Dorsolateral prefrontal cortex (tissue), 120 donors: ENCODE measurements at regions of chr16 and their contacts with region 1.

Region 1: GRCh38 chr16:29694384-29695195 is 15.6 kb downstream of the QPRT start:
- DNase-seq: no peak
- H3K4me3 ChIP-seq: no peak overlapping the region
- H3K27ac ChIP-seq: peak overlapping the region in 5 of 59 donors; percentile 7 to 41 (median 34)
- H3K27me3 ChIP-seq: no peaks in the 10 kb centered on the region
- CTCF ChIP-seq: no peak

Region 2: GRCh38 chr16:29745853-29746345 is 51.3 kb after region 1 on chr16 and contains the start of gene C16orf54:
- intact Hi-C with region 1: no loop called
- DNase-seq: peak in 4 of 10 donors; percentile 30 to 54 (median 50)
- H3K4me3 ChIP-seq: peak within 1 kb of the TSS in 31 of 59 donors; percentile 2 to 52 (median 27)
- H3K27ac ChIP-seq: no peak within 1 kb of the TSS
- H3K27me3 ChIP-seq: no peaks in the 10 kb centered on the region
- CTCF ChIP-seq: no peak
- total RNA-seq, gene C16orf54: 0.17 to 1.3 (median 0.45) TPM in 108 of 120 experiments, not detected in the others

Region 3: DNA sequence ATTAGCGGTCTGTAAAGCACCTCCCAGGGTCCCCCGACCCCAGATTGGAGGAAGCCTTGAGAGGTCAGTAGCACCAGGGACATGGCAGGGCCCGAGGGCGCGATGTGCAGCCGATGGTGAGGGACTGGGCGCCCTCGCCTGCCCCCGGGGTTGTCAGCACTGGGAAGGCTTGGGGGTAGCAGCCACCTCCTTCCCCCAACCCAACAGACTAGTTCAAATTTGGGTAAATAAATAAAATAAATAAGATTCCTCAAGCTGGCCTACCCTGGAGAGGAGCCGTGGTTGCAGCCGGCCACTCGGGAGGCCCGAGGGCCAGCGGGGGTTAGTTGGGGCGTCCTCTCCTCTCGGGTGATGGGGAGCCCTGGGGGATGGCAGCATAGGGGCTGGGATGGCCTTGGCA is 329.9 kb after region 1 on chr16:
- intact Hi-C with region 1: loop called in 1 of 2 experiments (anchors 5 kb)
- DNase-seq: no peak
- H3K4me3 ChIP-seq: no peak overlapping the region
- H3K27ac ChIP-seq: no peak overlapping the region
- H3K27me3 ChIP-seq: peaks cover 0 to 3% (median 0%) of the 10 kb centered on the region in 45 donors
- CTCF ChIP-seq: no peak

Region 4: DNA sequence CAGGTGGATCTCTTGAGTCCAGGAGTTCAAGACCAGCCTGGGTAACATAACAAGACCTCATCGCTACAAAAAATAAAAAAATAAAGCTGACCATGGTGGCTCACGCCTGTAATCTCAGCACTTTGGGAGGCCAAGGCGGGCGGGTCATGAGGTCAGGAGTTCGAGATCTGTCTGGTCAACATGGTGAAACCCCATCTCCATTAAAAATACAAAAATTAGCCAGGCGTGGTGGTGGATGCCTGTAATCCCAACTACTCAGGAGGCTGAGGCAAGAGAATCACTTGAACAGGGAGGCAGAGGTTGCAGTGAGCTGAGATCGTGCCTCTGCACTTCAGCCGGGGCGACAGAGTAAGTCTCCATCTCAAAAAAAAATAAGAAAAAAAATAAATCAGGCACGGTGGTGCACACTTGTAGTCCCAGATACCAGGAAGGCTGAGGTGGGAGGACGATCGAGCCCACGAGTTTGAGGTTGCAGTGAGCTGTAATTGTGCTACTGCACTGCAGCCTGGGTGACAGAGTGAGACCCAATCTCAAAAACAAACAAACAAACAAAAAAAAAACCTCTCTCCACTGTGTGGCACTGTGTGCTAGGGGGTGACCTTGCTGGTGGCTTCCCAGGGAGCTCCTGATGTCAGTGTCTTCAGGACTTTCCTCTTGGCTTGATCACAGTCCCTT is 448.2 kb after region 1 on chr16:
- intact Hi-C with region 1: no loop called
- DNase-seq: no peak
- H3K4me3 ChIP-seq: no peak overlapping the region
- H3K27ac ChIP-seq: no peak overlapping the region
- H3K27me3 ChIP-seq: no peaks in the 10 kb centered on the region
- CTCF ChIP-seq: peak in 14 of 56 donors; percentile 11 to 33 (median 20)